Panc1 (cell line): ENCODE measurements at regions of chr9 and their contacts with region 1.

Region 1: GRCh38 chr9:132997591-132997990 is 19.1 kb downstream of the GFI1B start:
- DNase-seq: no peak
- ATAC-seq: no peak
- H3K4me3 ChIP-seq: no peak overlapping the region
- H3K27ac ChIP-seq: no peak overlapping the region
- H3K4me1 ChIP-seq: no peaks in the 10 kb centered on the region
- H3K27me3 ChIP-seq: no peaks in the 10 kb centered on the region
- CTCF ChIP-seq: no peak

Region 2: GRCh38 chr9:132879457-132880320 is 117.9 kb before region 1 on chr9:
- CTCF ChIA-PET with region 1: no interaction called
- POLR2A ChIA-PET with region 1: interaction called, 16 read pairs
- in situ Hi-C with region 1: no loop called
- intact Hi-C with region 1: no loop called
- DNase-seq: no peak
- ATAC-seq: no peak
- H3K4me3 ChIP-seq: peak overlapping the region in 1 of 2 experiments; percentile 92; a peak in 2 of 4 replicates
- H3K27ac ChIP-seq: no peak overlapping the region
- H3K4me1 ChIP-seq: peaks cover 6% of the 10 kb centered on the region
- H3K27me3 ChIP-seq: no peaks in the 10 kb centered on the region
- CTCF ChIP-seq: no peak

Region 3: DNA sequence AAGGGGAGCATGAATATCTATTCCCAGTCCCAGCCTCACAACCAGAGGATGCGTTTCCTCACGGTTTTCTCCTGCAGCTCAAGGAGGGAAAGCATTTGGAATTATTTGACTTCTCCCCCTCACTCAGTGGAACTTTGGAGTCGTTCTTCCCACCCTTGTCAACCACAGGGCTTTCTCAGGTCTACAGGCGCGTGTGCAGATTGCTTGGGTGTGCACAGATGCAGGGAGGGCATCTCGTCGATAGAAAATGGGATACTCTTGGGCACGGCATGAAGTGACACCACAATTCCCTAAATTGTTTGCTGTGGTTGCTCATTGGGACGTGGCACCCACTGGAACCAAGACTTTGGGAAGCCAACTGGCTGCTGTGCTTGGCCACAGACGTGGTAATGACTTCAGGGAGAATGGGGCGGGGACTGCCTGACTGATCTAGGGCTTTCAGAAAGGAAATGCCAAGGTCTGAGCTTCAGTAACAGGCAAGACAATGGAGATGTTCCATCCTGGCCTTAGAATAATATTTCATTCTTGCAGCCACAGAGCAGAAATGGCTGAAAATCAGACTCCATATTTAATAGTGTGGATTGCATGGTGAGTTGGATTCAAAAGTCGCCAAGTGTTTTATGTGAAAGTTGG is 223.7 kb after region 1 on chr9:
- CTCF ChIA-PET with region 1: no interaction called
- POLR2A ChIA-PET with region 1: no interaction called
- in situ Hi-C with region 1: no loop called
- intact Hi-C with region 1: no loop called
- DNase-seq: no peak
- ATAC-seq: no peak
- H3K4me3 ChIP-seq: no peak overlapping the region
- H3K27ac ChIP-seq: no peak overlapping the region
- H3K4me1 ChIP-seq: no peaks in the 10 kb centered on the region
- H3K27me3 ChIP-seq: peaks cover 4% of the 10 kb centered on the region; the same call in 1 of the 2 replicates
- CTCF ChIP-seq: no peak